PC-9 (cell line): ENCODE measurements at regions of chr3 and their contacts with region 1.

Region 1: GRCh38 chr3:100590114-100590839 is 19.1 kb upstream of the ADGRG7 start:
- DNase-seq: peak; percentile 62 to 64
- H3K4me3 ChIP-seq: peak overlapping the region; percentile 21; the same call in 1 of the 2 replicates
- H3K27ac ChIP-seq: no peak overlapping the region
- H3K4me1 ChIP-seq: 0 out of 2 replicates have a peak, but pooled peaks cover 4% of the 10 kb centered on the region
- H3K27me3 ChIP-seq: no peaks in the 10 kb centered on the region
- CTCF ChIP-seq: peak; percentile 100

Region 2: DNA sequence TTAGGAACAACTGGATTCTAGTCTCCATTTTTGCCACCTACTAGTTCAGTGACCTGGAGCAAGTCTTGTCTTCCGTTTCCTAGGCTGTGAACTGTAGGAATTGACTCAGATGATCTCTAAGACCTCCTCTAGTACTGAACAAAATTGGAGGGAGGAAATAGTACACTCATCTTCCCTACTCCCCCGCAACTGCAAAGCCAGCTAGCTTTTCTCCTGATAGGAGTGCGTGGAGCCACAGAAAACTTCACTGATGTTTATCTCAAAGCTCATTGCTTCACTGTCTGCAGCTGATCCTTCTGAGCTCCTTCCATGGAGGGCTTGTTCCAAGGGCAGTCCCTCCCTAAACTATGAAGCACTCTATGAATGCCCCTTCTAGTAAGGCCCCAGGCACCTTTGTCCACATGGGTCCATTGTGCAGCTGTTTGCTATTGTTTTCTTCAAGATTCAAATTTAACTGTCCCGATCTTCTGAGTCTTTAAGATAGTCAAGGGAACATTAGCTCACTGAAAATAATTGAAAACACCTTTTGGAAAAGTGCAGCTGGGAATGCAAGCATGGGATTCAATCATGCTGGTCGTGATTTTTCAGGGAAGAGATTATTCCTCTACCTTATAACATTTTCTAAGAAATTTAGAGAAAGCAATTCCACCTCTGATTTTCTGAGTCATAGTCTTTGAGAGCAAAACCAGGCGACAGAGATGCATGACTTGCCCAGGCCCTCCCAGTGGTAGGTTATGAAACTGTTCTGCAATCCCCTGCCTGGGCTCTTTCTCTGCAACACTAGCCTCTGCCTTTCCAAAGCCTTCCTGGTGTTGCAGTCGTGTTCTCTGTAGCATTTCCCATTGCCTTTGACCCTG is 500.2 kb before region 1 on chr3:
- CTCF ChIA-PET with region 1: interaction called, 14 read pairs
- POLR2A ChIA-PET with region 1: no interaction called
- intact Hi-C with region 1: no loop called
- DNase-seq: peak in 1 of 2 experiments; percentile 63
- H3K4me3 ChIP-seq: no peak overlapping the region
- H3K27ac ChIP-seq: no peak overlapping the region
- H3K4me1 ChIP-seq: peaks cover 10% of the 10 kb centered on the region
- H3K27me3 ChIP-seq: no peaks in the 10 kb centered on the region
- CTCF ChIP-seq: peak; percentile 69

Region 3: GRCh38 chr3:100316641-100317069 is 273.6 kb before region 1 on chr3:
- CTCF ChIA-PET with region 1: interaction called, 8 read pairs
- POLR2A ChIA-PET with region 1: no interaction called
- intact Hi-C with region 1: loop called (anchors 2 kb)
- DNase-seq: peak; percentile 33 to 59
- H3K4me3 ChIP-seq: no peak overlapping the region
- H3K27ac ChIP-seq: no peak overlapping the region
- H3K4me1 ChIP-seq: no peaks in the 10 kb centered on the region
- H3K27me3 ChIP-seq: no peaks in the 10 kb centered on the region
- CTCF ChIP-seq: peak; percentile 93

Region 4: GRCh38 chr3:100400780-100401673 is 189.2 kb before region 1 on chr3 and contains the starts of genes LNP1 and TOMM70:
- CTCF ChIA-PET with region 1: interaction called, 5 read pairs
- POLR2A ChIA-PET with region 1: no interaction called
- intact Hi-C with region 1: loop called (anchors 1 kb)
- DNase-seq: peak; percentile 97 to 98
- H3K4me3 ChIP-seq: peak within 1 kb of the TSS; percentile 83
- H3K27ac ChIP-seq: peak within 1 kb of the TSS; percentile 78
- H3K4me1 ChIP-seq: peaks cover 36% of the 10 kb centered on the region
- H3K27me3 ChIP-seq: no peaks in the 10 kb centered on the region
- CTCF ChIP-seq: no peak
- total RNA-seq, gene LNP1: 4.8 TPM in 2 replicates
- total RNA-seq, gene TOMM70: 63.7 and 65.2 TPM in 2 replicates

Region 5: GRCh38 chr3:100603469-100603868 is 13.2 kb after region 1 on chr3:
- CTCF ChIA-PET with region 1: interaction called, 13 read pairs
- POLR2A ChIA-PET with region 1: no interaction called
- intact Hi-C with region 1: no loop called
- DNase-seq: peak; percentile 41 to 60
- H3K4me3 ChIP-seq: no peak overlapping the region
- H3K27ac ChIP-seq: no peak overlapping the region
- H3K4me1 ChIP-seq: peaks cover 14% of the 10 kb centered on the region
- H3K27me3 ChIP-seq: no peaks in the 10 kb centered on the region
- CTCF ChIP-seq: peak; percentile 77

Region 6: GRCh38 chr3:101170062-101170771 is 579.9 kb after region 1 on chr3:
- CTCF ChIA-PET with region 1: no interaction called
- POLR2A ChIA-PET with region 1: no interaction called
- intact Hi-C with region 1: no loop called
- DNase-seq: no peak
- H3K4me3 ChIP-seq: no peak overlapping the region
- H3K27ac ChIP-seq: no peak overlapping the region
- H3K4me1 ChIP-seq: no peaks in the 10 kb centered on the region
- H3K27me3 ChIP-seq: no peaks in the 10 kb centered on the region
- CTCF ChIP-seq: no peak

Region 7: GRCh38 chr3:101303089-101303731 is 712.9 kb after region 1 on chr3:
- CTCF ChIA-PET with region 1: no interaction called
- POLR2A ChIA-PET with region 1: interaction called, 13 read pairs
- intact Hi-C with region 1: no loop called
- DNase-seq: no peak
- H3K4me3 ChIP-seq: no peak overlapping the region
- H3K27ac ChIP-seq: no peak overlapping the region
- H3K4me1 ChIP-seq: no peaks in the 10 kb centered on the region
- H3K27me3 ChIP-seq: no peaks in the 10 kb centered on the region
- CTCF ChIP-seq: no peak